ENCODE measurements at regions of chr5 and their contacts with region 1.

Region 1: DNA sequence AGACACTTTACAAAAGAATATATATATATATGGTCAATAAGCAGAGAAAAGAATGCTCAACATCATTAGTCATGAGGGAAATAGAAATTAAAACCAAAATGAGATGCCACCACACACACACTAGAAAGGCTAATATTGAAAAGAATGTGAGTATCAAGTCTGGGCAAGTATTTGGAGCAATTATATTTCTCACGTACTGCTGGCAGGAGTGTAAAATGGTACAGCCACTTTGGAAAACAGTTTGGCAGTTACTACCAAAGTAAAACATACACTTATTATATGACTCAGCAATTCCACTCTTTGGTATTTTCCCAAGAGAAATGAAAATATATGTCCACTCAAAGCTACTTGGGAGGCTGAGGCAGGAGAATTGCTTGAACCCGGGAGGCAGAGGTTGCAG is 29.8 kb downstream of the NEUROG1 start:
- DNase-seq: peak; percentile 93
- H3K4me3 ChIP-seq: no peak overlapping the region
- H3K27ac ChIP-seq: peak overlapping the region; percentile 35
- H3K4me1 ChIP-seq: peaks cover 14% of the 10 kb centered on the region
- H3K27me3 ChIP-seq: no peaks in the 10 kb centered on the region
- CTCF ChIP-seq: no peak

Region 2: GRCh38 chr5:135482381-135482933 is 23.5 kb before region 1 on chr5:
- CTCF ChIA-PET with region 1: no interaction called
- dilution Hi-C with region 1: no loop called
- in situ Hi-C with region 1: no loop called
- intact Hi-C with region 1: no loop called
- DNase-seq: no peak
- H3K4me3 ChIP-seq: no peak overlapping the region
- H3K27ac ChIP-seq: no peak overlapping the region
- H3K4me1 ChIP-seq: no peaks in the 10 kb centered on the region
- H3K27me3 ChIP-seq: no peaks in the 10 kb centered on the region
- CTCF ChIP-seq: no peak

Region 3: DNA sequence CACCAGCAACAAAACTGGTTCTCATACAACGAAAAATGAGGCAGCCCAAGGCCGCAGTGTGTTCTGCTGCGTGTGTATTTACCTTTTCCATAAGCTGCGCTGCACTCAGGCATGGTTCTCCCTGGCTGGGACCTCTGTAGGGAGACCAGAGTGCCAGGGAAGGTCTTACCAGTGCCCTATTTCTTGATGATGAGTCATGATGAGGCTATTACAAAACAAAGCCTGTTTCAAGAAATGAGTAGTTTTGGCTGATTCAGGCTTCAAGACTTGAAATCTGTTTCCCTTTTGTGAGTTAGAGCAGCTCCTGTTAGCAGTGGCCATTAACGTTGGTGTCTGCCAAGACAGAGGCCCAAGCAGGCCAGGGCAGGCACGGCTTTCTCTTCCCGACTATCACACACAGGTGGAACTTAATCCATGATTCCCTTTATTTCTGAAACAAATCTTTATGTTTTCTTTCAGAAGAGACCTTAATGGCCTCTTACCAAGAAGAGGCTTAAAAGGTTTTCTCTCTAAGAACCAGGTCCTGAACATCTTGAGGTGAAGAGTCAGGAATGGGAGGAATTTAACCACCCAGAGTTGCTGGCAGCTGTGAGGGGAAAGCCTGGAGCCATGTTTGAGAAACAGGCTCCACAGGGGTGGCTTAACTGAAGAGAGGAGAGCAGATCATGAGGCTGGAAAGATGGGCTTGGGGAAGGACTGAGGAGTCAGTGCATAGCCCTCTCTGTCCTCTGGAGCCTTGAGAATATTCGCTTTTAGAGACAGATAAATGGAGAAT is 12.4 kb before region 1 on chr5:
- CTCF ChIA-PET with region 1: no interaction called
- dilution Hi-C with region 1: no loop called
- in situ Hi-C with region 1: no loop called
- intact Hi-C with region 1: loop called (anchors 1 kb)
- DNase-seq: peak; percentile 95
- H3K4me3 ChIP-seq: no peak overlapping the region
- H3K27ac ChIP-seq: peak overlapping the region; percentile 74
- H3K4me1 ChIP-seq: peaks cover 43% of the 10 kb centered on the region
- H3K27me3 ChIP-seq: no peaks in the 10 kb centered on the region
- CTCF ChIP-seq: no peak

Measured in mammary epithelial cell (primary cell).